Ovary (tissue), 10 donors: ENCODE measurements at regions of chr1 and their contacts with region 1.

Region 1: DNA sequence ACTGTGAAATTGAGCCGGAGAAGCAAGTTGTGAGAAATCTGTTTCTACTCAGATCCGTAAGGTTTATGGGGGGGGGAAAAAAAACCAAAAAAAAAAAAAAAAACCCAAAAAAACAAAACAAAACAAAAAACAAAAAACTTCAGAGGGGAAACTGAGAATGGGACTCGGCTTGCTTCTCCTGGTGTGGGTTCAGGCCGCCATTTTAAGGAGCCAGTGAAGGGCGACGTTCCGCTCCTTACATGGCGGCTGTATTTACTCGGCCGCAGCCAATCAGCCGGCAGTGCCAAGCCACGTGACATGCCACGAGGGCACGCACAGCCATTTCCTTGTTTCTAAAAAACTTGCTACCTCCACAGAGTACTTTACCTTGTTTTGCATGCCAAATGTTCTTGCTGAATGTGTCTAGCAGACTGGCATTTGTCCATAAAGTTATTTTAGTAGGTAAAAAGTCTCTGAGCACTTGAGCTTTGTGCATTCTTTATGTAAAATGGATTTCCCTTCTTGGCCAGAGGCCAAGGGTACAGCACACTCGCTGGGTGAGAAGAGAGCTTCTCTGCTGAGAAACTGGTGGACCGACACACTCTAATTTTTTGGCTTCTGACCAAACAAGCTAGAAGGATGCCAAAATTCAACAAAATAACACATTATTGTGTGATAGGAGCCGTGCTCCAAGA is 101.8 kb downstream of the NFIA start:
- DNase-seq: peak; percentile 94 to 98 (median 97)
- H3K4me3 ChIP-seq: peak overlapping the region; percentile 31
- H3K27ac ChIP-seq: peak overlapping the region; percentile 6 to 83
- H3K4me1 ChIP-seq: peaks cover 8% of the 10 kb centered on the region
- H3K27me3 ChIP-seq: no peaks in the 10 kb centered on the region
- CTCF ChIP-seq: no peak
- EP300 ChIP-seq: no peak
- POLR2A ChIP-seq: peak; percentile 18

Region 2: DNA sequence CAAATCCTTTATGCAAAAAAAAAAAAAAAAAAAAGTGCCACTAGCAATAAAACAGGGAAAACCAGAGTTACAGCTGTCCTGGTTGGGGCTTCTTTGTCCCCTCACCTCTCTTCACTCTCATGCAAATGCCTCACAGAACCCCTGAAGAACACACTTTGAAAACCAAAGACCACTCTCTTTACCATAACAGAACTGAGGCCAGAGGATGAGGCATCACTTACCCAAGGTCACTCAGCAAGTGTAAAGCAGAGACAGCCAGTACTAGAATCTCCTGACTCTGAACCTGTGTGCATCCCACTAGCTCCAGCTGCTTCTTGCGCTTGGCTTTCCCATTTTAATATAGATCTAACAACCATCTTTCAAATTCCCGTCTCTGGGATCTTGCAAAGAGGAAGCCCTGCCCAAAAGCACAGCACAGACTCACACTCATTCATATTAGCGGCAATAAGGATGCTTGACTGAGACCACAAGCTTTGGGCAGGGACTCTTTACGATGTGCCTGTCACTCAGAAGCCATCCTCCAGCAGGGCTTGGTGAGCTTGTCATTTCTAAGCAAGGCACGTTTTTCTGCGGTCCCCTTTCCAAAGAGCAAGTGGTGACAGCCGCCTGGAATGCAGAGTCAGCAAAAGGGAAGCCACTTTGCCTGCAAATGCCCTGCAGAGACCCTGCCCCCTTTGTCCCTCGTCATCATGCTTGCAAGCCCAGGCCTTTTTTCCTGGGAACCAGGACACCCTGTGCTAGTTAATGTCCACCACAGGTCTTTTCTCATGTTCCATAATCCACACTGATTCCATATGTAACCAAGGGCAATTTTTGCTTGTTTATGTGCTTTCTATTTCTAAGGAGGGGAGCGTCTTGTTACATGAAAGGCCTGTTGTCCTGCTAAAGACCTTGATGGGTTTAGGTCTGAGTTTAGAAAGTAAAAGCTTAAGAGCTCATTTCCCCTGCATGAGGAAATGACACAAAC is 178.3 kb before region 1 on chr1:
- intact Hi-C with region 1: no loop called
- DNase-seq: no peak
- H3K4me3 ChIP-seq: no peak overlapping the region
- H3K27ac ChIP-seq: no peak overlapping the region
- H3K4me1 ChIP-seq: no peaks in the 10 kb centered on the region
- H3K27me3 ChIP-seq: no peaks in the 10 kb centered on the region
- CTCF ChIP-seq: no peak
- EP300 ChIP-seq: no peak
- POLR2A ChIP-seq: no peak

Region 3: GRCh38 chr1:61067404-61068019 is 116.7 kb before region 1 on chr1:
- intact Hi-C with region 1: no loop called
- DNase-seq: no peak
- H3K4me3 ChIP-seq: no peak overlapping the region
- H3K27ac ChIP-seq: no peak overlapping the region
- H3K4me1 ChIP-seq: no peaks in the 10 kb centered on the region
- H3K27me3 ChIP-seq: no peaks in the 10 kb centered on the region
- CTCF ChIP-seq: no peak
- EP300 ChIP-seq: no peak
- POLR2A ChIP-seq: no peak

Region 4: GRCh38 chr1:61079898-61080336 is 104.3 kb before region 1 on chr1:
- intact Hi-C with region 1: loop called in 3 of 4 experiments (anchors 5 to 10 kb)
- DNase-seq: peak; percentile 83 to 91 (median 88)
- H3K4me3 ChIP-seq: no peak overlapping the region
- H3K27ac ChIP-seq: peak overlapping the region in 1 of 2 donors; percentile 70
- H3K4me1 ChIP-seq: peaks cover 9% of the 10 kb centered on the region
- H3K27me3 ChIP-seq: no peaks in the 10 kb centered on the region
- CTCF ChIP-seq: peak in 1 of 3 donors; percentile 35
- EP300 ChIP-seq: no peak
- POLR2A ChIP-seq: no peak

Region 5: DNA sequence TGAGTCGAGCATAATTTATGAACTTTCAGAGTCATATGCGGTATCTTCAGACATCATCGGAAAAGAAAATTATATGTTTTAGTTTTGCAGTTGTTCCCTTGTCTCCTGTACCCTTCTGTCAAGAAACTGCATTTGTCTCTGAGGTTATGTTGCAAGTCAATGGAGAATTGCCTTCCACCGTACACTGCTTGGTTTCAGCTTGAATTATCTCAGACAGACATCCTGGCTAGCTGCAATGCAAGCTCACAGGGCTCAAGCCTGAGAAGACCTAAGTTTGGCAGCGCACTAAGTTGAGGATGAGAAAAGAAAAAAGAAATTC is 54.2 kb after region 1 on chr1:
- intact Hi-C with region 1: loop called in 1 of 4 experiments (anchors 10 kb)
- DNase-seq: no peak
- H3K4me3 ChIP-seq: no peak overlapping the region
- H3K27ac ChIP-seq: no peak overlapping the region
- H3K4me1 ChIP-seq: peaks cover 3% of the 10 kb centered on the region
- H3K27me3 ChIP-seq: no peaks in the 10 kb centered on the region
- CTCF ChIP-seq: no peak
- EP300 ChIP-seq: no peak
- POLR2A ChIP-seq: no peak

Region 6: GRCh38 chr1:61250933-61251332 is 66.8 kb after region 1 on chr1:
- intact Hi-C with region 1: no loop called
- DNase-seq: no peak
- H3K4me3 ChIP-seq: no peak overlapping the region
- H3K27ac ChIP-seq: no peak overlapping the region
- H3K4me1 ChIP-seq: peaks cover 15% of the 10 kb centered on the region
- H3K27me3 ChIP-seq: no peaks in the 10 kb centered on the region
- CTCF ChIP-seq: no peak
- EP300 ChIP-seq: no peak
- POLR2A ChIP-seq: no peak